Activated T-helper 1 cell treated with anti-CD3 and anti-CD28 coated beads, Interleukin-12 subunit alpha, Interleukin-12 subunit beta, Interleukin-2, Interleukin-4 antibody, amounts not matched to agents 30 ng/mL and 10 ng/mL and 1 ng/mL, durations not matched to agents 14 hours and 24 hours and 36 hours (primary cell): ENCODE measurements at regions of chr10 and their contacts with region 1.

Region 1: GRCh38 chr10:43648398-43649184 is at the start of gene ZNF32:
- DNase-seq: peak; percentile 78
- H3K4me3 Mint-ChIP-seq: peak within 1 kb of the TSS; percentile 89
- H3K27ac Mint-ChIP-seq: peak within 1 kb of the TSS; percentile 90
- H3K4me1 Mint-ChIP-seq: peaks cover 11% of the 10 kb centered on the region
- H3K27me3 Mint-ChIP-seq: peaks cover 11% of the 10 kb centered on the region
- total RNA-seq, gene ZNF32: 13.2 and 13.7 TPM in 2 replicates

Region 2: DNA sequence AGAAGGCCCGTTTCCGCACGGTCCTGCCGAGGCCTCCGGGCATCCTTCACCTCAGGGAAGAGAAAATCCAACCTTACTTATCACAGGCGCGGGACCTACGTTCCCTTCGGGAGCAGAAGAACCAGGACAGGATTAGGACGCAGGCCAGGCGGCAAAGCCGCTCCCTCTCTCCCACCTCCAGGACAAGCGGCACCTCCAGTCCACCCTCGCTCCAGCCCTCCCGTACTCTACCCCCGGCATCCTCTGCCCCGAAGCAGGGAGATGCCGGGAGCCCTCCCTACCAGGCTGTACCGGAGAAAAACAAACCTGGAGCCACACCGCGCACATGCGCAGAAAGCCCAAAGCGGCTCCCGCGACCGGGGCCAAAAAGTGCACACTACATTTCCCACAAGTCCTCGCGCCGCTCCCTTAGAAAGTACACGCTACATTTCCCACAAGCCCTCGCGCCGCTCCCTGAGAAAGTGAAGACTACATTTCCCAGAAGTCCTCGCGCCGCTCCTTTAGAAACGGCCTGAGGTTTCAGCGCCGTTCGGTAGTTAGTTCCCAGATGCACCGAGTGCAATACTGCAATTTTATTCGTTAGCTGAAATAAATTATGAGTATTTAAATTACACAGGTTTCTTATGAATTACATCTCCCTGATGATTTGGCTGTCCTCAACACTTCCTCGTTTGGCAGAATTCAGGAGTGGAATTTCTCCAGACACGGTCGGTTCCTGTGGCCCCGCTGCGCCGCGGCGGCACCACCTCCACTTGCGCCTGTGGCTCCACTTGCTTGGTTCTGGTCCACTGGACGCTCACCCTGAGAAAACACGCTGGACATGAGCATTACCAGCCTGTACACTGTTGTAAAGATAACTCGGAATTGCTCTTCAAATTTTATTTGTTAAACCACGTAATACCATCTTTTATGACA is 1095.8 kb before region 1 on chr10:
- intact Hi-C with region 1: loop called (anchors 1 kb)
- DNase-seq: peak; percentile 94
- H3K4me3 Mint-ChIP-seq: peak overlapping the region; percentile 99
- H3K27ac Mint-ChIP-seq: peak overlapping the region; percentile 98
- H3K4me1 Mint-ChIP-seq: peaks cover 38% of the 10 kb centered on the region
- H3K27me3 Mint-ChIP-seq: no peaks in the 10 kb centered on the region

Region 3: DNA sequence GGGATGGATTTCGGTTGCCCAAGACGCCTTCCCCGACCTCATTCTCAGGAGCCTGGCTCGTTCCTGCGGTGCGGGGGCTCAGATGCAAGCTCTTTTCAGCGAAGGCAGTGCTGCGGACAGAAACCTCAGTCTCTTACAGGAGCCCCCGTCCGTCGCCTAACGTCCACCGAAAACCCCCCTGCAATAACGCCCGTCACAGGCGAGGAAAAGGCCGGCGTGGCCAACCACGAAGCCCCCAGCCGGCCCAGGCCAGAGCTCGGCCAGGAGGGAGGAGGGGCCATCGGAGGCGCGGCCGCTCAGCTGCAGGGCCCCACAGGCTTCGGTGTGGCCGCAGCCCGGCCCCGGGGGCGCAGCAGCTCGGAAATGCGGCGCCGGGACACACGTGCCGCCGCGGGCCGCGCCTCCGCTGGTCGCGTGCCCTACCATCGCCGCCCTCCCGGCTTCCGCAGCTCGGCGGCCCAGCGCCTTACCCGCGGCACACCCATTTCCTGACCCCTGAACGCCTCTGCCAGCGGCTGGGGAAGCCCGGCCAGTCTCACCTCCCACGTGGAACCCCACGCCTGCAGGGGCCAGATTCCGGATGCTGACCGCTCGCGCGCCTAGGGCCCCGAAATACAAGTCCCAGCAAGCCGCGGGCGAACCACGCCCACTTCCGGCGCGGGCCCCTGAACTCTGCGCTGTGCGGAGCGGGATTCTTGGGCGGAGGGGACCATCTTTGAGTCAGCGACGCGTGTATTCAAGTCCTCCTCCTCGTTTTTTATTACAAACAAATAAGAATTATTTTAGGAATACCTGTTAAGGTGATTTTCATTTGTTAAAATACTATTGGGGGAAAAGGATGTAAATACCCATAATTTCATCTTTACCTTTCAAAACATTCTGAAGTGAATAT is 74.3 kb before region 1 on chr10 and contains the start of gene ZNF239:
- intact Hi-C with region 1: loop called (anchors 2 kb)
- DNase-seq: peak; percentile 48
- H3K4me3 Mint-ChIP-seq: peak within 1 kb of the TSS; percentile 57
- H3K27ac Mint-ChIP-seq: peak within 1 kb of the TSS; percentile 45
- H3K4me1 Mint-ChIP-seq: peaks cover 17% of the 10 kb centered on the region
- H3K27me3 Mint-ChIP-seq: no peaks in the 10 kb centered on the region
- total RNA-seq, gene ZNF239: 1.4 and 1.7 TPM in 2 replicates

Region 4: DNA sequence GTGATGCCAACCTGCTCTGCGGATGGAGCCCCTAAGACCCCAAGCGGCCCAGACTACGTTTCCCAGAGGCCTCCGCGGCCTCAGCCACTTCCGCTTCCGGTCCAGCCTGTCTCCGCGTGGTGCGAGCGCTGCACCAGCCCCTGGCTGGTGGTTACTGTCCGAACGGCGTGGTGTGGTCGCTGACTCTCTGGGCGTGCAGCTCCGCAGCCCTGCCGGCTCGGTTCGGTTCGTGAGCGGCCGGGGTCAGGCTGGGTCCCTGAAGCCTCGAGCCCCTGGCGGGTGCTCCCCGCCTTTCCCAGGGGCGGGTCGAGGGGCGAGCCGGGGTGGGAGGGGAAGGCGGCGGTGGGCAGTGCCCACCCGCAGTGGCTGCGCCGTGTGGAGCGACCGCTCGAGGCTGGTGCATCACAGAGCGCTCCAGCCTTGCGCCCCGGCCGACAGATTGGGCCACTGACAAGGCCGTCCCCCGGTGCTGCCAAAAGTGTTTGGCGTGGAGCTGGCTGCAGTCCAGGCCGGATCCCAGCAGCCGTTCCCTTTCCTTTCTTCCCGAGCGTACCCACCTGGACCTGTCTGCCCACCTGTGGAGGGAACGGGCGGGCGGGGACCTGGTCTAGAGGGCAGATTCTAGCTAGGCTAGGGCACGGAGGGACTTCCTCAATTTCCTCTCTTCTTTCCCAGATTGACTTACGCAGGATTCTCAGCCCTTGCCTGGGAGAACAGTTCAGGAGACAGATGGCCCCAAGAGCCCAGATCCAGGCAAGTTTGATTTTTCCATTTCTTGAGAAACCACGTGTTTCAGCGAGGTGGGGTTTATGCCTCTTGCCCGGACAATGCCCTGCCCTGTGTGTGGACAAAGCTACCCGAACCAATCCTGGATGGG is 42.0 kb before region 1 on chr10 and contains the start of gene ZNF485:
- intact Hi-C with region 1: loop called (anchors 1 kb)
- DNase-seq: peak; percentile 34
- H3K4me3 Mint-ChIP-seq: peak within 1 kb of the TSS; percentile 84
- H3K27ac Mint-ChIP-seq: peak within 1 kb of the TSS; percentile 53
- H3K4me1 Mint-ChIP-seq: peaks cover 26% of the 10 kb centered on the region
- H3K27me3 Mint-ChIP-seq: no peaks in the 10 kb centered on the region
- total RNA-seq, gene ZNF485: 5.7 and 6.6 TPM in 2 replicates

Region 5: GRCh38 chr10:44506386-44506785 is 857.8 kb after region 1 on chr10:
- intact Hi-C with region 1: no loop called
- DNase-seq: no peak
- H3K4me3 Mint-ChIP-seq: no peak overlapping the region
- H3K27ac Mint-ChIP-seq: no peak overlapping the region
- H3K4me1 Mint-ChIP-seq: no peaks in the 10 kb centered on the region
- H3K27me3 Mint-ChIP-seq: no peaks in the 10 kb centered on the region